ENCODE measurements at regions of chr6 and their contacts with region 1.

Region 1: GRCh38 chr6:149513915-149514314 is 29.1 kb upstream of the ZC3H12D start:
- DNase-seq: no peak
- ATAC-seq: no peak
- H3K4me3 Mint-ChIP-seq: no peak overlapping the region
- H3K27ac Mint-ChIP-seq: no peak overlapping the region
- H3K4me1 Mint-ChIP-seq: peaks cover 55% of the 10 kb centered on the region
- H3K27me3 Mint-ChIP-seq: no peaks in the 10 kb centered on the region

Region 2: DNA sequence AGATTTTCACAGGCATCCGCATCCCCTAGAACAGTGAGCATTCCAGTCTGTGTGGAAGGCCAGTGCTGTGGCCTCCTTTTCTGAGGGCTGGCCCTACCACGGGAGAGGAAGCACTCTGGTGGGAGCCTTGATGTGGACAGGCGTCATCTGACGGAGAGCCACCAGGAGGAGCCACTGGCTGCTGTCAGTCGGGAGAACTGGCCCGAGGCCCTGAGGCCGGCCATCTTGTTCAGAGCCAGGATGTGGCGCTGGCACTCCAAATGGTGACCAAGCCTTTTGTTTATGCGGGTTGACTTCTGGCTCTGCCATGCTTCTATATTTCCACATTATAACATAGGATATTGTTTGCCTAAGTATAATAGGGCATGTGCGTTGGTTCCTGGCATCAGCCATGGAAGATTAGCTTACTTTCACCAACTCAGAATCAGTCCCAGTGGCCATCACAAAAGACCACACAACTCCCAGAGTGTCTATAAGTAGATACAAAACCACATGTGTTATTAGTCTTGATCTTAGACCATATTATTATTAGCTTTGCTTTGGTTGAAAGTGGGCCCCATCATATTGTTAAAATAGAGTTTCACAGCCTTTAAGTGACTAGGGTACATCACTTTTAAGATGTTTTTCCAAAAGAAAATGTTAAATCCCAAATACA is 470.3 kb before region 1 on chr6:
- CTCF ChIA-PET with region 1: interaction called, 13 read pairs
- POLR2A ChIA-PET with region 1: no interaction called
- intact Hi-C with region 1: no loop called
- DNase-seq: peak; percentile 66
- ATAC-seq: peak; percentile 24
- H3K4me3 Mint-ChIP-seq: no peak overlapping the region
- H3K27ac Mint-ChIP-seq: no peak overlapping the region
- H3K4me1 Mint-ChIP-seq: peaks cover 46% of the 10 kb centered on the region
- H3K27me3 Mint-ChIP-seq: no peaks in the 10 kb centered on the region

Region 3: DNA sequence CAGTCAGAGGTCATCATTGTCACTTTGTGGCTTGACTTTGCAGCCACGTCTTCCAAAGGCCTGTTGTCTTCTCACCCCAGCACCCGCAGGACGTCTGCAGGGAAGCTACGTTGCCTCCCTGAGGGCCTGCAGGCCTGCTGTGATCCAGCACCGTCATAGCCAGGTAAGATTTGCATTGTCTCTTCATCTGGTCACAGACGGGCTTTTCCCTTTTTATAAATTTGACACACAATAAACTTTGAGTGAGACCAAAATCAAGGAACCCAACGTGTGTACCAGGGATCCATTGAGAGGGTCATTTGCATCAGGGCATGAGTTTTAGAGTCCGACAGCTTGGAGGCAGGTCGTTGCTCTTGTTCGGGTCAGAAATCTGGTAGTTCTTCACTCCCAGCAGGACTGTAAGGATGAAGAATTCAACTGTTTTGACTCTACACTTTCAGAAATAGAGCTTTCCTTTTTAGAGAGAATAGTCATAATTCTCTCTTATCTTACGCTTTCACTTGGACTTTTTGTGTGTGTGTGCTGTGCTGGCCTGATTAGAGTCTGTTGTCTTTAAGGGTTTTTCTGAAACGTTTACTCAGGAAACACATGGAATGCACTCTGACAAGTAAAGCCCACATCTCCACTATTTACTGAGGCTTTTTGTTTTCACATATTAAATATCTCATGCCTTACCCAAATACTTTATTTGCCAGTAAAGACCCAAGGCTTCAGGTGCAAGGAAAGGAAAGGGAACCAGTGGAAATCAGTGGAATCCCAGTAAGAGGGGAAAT is 373.6 kb before region 1 on chr6:
- CTCF ChIA-PET with region 1: no interaction called
- POLR2A ChIA-PET with region 1: no interaction called
- intact Hi-C with region 1: loop called in 1 of 2 experiments (anchors 5 kb)
- DNase-seq: peak; percentile 85
- ATAC-seq: peak; percentile 84
- H3K4me3 Mint-ChIP-seq: peak overlapping the region; percentile 63
- H3K27ac Mint-ChIP-seq: peak overlapping the region; percentile 97
- H3K4me1 Mint-ChIP-seq: peaks cover 42% of the 10 kb centered on the region
- H3K27me3 Mint-ChIP-seq: no peaks in the 10 kb centered on the region

Region 4: GRCh38 chr6:149443411-149444181 is 70.3 kb before region 1 on chr6:
- CTCF ChIA-PET with region 1: interaction called, 26 read pairs
- POLR2A ChIA-PET with region 1: no interaction called
- intact Hi-C with region 1: no loop called
- DNase-seq: peak; percentile 43
- ATAC-seq: peak; percentile 35
- H3K4me3 Mint-ChIP-seq: no peak overlapping the region
- H3K27ac Mint-ChIP-seq: no peak overlapping the region
- H3K4me1 Mint-ChIP-seq: peaks cover 10% of the 10 kb centered on the region
- H3K27me3 Mint-ChIP-seq: no peaks in the 10 kb centered on the region

Region 5: GRCh38 chr6:149468179-149468578 is 45.7 kb before region 1 on chr6:
- CTCF ChIA-PET with region 1: interaction called, 19 read pairs
- POLR2A ChIA-PET with region 1: no interaction called
- intact Hi-C with region 1: loop called in 1 of 2 experiments (anchors 10 kb)
- DNase-seq: no peak
- ATAC-seq: no peak
- H3K4me3 Mint-ChIP-seq: no peak overlapping the region
- H3K27ac Mint-ChIP-seq: peak overlapping the region; percentile 63
- H3K4me1 Mint-ChIP-seq: peaks cover 70% of the 10 kb centered on the region
- H3K27me3 Mint-ChIP-seq: no peaks in the 10 kb centered on the region

Region 6: GRCh38 chr6:149484733-149485700 is 28.9 kb before region 1 on chr6 and contains the start of gene ZC3H12D:
- CTCF ChIA-PET with region 1: interaction called, 40 read pairs
- POLR2A ChIA-PET with region 1: interaction called, 7 read pairs
- intact Hi-C with region 1: loop called (anchors 1 kb)
- DNase-seq: peak; percentile 92
- ATAC-seq: peak; percentile 78
- H3K4me3 Mint-ChIP-seq: peak within 1 kb of the TSS; percentile 92
- H3K27ac Mint-ChIP-seq: peak within 1 kb of the TSS; percentile 99
- H3K4me1 Mint-ChIP-seq: peaks cover 65% of the 10 kb centered on the region
- H3K27me3 Mint-ChIP-seq: no peaks in the 10 kb centered on the region
- total RNA-seq, gene ZC3H12D: 72.2 to 89.9 TPM

Region 7: DNA sequence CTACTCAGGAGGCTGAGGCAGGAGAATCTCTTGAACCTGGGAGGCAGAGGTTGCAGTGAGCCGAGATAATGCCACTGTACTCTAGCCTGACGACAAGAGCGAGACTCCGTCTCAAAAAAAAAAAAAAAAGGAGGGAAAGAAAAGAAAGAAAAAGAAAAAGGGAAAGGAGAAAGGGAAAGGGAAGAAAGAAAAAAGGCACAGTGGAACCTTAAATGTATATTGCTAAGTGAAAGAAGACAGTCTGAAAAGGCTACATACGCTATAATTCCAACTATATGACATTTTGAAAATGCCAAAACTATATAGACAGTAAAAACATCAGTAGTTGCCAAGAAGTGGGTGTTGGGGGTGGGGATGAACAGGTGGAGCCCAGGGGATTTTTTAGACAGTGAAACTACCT is 15.7 kb after region 1 on chr6:
- CTCF ChIA-PET with region 1: interaction called, 40 read pairs
- POLR2A ChIA-PET with region 1: interaction called, 3 read pairs
- intact Hi-C with region 1: no loop called
- DNase-seq: no peak
- ATAC-seq: no peak
- H3K4me3 Mint-ChIP-seq: no peak overlapping the region
- H3K27ac Mint-ChIP-seq: no peak overlapping the region
- H3K4me1 Mint-ChIP-seq: peaks cover 19% of the 10 kb centered on the region
- H3K27me3 Mint-ChIP-seq: no peaks in the 10 kb centered on the region

Measured in activated CD4-positive, alpha-beta T cell treated with anti-CD3 and anti-CD28 coated beads for 36 hours (primary cell).